Activated CD8-positive, alpha-beta T cell treated with anti-CD3 and anti-CD28 coated beads, Interleukin-2, amount 10 ng/mL, durations not matched to agents 7 days and 5 days (primary cell): ENCODE measurements at regions of chr1 and their contacts with region 1.

Region 1: DNA sequence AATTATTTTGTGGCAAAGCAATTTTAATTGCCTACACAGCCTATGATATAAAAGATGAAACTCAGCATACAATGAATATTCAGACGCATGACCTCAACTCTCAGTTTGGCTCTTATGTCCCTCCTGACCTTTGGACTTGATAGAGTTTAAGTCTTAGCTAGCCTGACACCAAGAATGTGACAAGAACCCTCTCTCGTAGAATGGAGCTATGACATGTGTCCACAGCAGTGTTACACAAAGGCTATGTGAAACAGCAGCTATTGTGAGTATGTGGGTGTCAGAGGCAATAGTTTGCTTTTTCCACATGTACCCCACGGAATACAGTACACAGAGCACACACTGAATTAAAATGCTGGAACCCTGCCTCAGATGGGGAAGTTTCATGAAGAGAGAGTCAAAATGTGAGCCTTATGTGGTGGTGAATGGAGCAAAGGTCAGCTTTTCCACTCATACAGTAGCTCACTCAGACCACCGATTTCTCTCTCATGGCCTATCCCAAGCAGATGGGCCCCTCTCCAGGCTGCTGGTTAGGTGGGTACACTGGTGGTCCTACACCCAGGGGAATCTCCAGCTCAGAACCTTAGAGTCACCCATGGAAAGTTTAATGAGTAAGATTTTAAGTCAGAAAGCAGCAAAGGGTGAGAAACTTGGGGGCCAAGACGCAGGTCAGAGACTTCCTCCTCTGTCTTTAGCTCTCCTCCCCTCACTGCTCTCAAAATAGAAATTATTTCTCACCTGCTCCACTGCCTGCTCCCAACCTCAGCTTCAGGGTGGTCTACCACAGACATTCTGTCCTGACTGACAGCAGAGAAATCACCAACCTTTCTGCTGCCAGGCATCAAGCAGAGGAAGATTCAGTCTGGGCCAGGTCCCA is 10.1 kb upstream of the XCL2 start:
- DNase-seq: peak; percentile 41
- ATAC-seq: peak; percentile 47
- H3K4me3 Mint-ChIP-seq: peak overlapping the region; percentile 17
- H3K27ac Mint-ChIP-seq: peak overlapping the region; percentile 77
- H3K4me1 Mint-ChIP-seq: peaks cover 72% of the 10 kb centered on the region
- H3K27me3 Mint-ChIP-seq: no peaks in the 10 kb centered on the region

Region 2: DNA sequence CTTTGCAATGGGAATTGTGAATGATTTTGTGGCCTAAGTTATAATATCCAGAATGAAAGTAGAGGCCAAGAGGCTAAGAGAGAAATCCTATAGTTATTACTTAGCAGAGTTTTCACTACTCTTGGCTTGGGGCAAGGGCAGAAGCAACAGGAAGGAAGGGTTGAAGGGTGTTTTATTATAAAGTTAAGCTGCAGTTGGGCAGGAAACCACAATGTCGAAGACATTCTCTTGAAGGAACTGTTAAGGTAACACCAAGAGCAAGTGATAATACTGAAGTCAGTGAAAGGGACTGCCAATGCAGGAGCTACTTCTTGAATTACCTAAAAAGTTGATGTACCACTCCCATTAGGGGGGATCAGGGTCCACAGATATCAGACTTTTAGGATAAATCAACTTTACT is 18.4 kb before region 1 on chr1:
- CTCF ChIA-PET with region 1: interaction called, 4 read pairs
- POLR2A ChIA-PET with region 1: interaction called, 13 read pairs
- DNase-seq: peak; percentile 75
- ATAC-seq: peak; percentile 89
- H3K4me3 Mint-ChIP-seq: peak overlapping the region; percentile 61
- H3K27ac Mint-ChIP-seq: peak overlapping the region; percentile 92
- H3K4me1 Mint-ChIP-seq: peaks cover 89% of the 10 kb centered on the region
- H3K27me3 Mint-ChIP-seq: no peaks in the 10 kb centered on the region

Region 3: DNA sequence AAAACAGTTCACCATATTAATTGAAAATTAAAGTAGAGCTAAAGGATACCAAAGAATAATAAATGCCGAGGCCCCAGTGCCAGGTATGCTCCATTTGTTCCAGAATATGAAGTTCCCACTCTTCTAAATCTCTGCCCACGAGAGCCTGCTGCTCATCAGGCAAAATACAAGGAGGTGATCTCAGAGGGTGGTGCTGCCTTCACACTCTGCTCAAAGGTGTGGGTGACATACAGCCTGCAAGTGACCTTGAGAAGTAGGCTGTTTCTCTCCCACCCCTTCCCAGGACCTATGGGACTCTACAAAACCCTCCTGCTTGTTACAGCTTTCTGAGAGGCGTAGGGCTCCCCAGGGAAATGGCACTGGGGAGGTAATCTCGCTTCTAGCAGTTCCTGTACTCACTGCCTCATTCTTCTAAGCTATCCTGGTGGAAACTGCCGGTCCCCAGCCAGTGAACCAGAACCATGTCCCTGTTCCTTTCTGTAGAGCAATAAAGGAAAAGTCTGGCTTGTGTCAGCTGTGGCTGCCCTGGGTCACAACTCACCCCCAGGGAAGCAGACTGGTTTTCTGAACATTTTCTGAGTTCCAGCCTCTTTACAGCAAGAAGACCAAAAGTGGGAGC is 202.0 kb after region 1 on chr1:
- CTCF ChIA-PET with region 1: no interaction called
- POLR2A ChIA-PET with region 1: no interaction called
- DNase-seq: no peak
- ATAC-seq: no peak
- H3K4me3 Mint-ChIP-seq: no peak overlapping the region
- H3K27ac Mint-ChIP-seq: no peak overlapping the region
- H3K4me1 Mint-ChIP-seq: peaks cover 5% of the 10 kb centered on the region
- H3K27me3 Mint-ChIP-seq: peaks cover 21% of the 10 kb centered on the region